Endothelial cell of umbilical vein (primary cell): ENCODE measurements at regions of chr2 and their contacts with region 1.

Region 1: DNA sequence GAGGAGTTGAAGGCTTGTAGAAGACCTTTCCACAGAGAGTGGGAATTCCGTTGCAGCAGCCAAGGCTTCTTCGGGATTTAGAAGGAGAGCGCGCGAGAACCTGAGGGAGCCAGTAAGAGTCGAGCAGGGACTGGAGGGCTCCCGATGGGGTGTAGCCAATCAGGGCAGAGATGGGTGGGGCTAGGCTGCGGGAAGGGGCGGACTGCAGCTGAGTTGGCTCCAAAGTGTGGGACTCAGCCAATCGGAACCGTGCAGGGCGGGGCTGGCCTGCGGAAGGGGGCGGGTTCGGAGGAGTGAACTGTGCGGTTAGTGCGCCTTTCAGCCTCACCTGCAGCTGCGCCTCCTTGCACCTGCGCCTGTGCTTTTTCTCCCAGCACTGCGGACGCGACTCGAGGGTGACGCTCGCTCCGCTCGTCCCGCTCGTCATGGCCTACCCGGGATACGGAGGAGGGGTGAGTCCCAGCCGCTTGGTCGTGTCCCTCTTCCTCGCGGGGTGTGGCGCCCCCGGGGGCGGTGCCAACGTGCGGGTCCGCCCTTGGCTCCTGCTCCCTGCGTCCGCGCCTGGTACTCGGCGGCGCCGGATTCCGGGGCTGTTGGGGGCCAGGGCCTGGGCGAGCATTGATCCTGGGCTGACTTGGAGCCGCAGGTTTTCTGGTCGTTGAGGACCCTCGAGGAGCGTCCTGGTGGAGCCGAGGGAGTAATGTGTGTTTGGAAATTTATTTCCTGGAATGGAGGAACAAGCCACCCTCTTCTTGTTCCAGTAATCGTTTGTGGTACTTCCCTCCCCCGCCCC is at the start of gene GCA:
- DNase-seq: peak; percentile 98
- H3K4me3 ChIP-seq: peak within 1 kb of the TSS; percentile 49 to 94 (median 82)
- H3K27ac ChIP-seq: peak within 1 kb of the TSS; percentile 27
- H3K4me1 ChIP-seq: peaks cover 4% of the 10 kb centered on the region
- H3K27me3 ChIP-seq: peaks cover 6 to 9% of the 10 kb centered on the region in 2 experiments
- CTCF ChIP-seq: peak in 1 of 2 donors; percentile 3
- POLR2A ChIP-seq: peak; percentile 76
- total RNA-seq, gene GCA: 6.2 and 10.7 TPM in 2 replicates

Region 2: GRCh38 chr2:162318328-162319180 is 25.5 kb before region 1 on chr2 and contains the start of gene IFIH1:
- CTCF ChIA-PET with region 1: no interaction called
- POLR2A ChIA-PET with region 1: no interaction called
- dilution Hi-C with region 1: no loop called
- intact Hi-C with region 1: loop called (anchors 1 kb)
- DNase-seq: peak; percentile 88
- H3K4me3 ChIP-seq: peak within 1 kb of the TSS; percentile 56 to 66 (median 59)
- H3K27ac ChIP-seq: peak within 1 kb of the TSS; percentile 43
- H3K4me1 ChIP-seq: peaks cover 8% of the 10 kb centered on the region
- H3K27me3 ChIP-seq: no peaks in the 10 kb centered on the region
- CTCF ChIP-seq: peak; percentile 22 to 48
- POLR2A ChIP-seq: no peak
- total RNA-seq, gene IFIH1: 4.7 and 6.9 TPM in 2 replicates

Region 3: GRCh38 chr2:162333968-162334367 is 10.1 kb before region 1 on chr2:
- CTCF ChIA-PET with region 1: interaction called, 12 read pairs
- POLR2A ChIA-PET with region 1: interaction called, 3 read pairs
- dilution Hi-C with region 1: no loop called
- intact Hi-C with region 1: no loop called
- DNase-seq: peak; percentile 35
- H3K4me3 ChIP-seq: no peak overlapping the region
- H3K27ac ChIP-seq: no peak overlapping the region
- H3K4me1 ChIP-seq: no peaks in the 10 kb centered on the region
- H3K27me3 ChIP-seq: peaks cover 0 to 2% of the 10 kb centered on the region in 2 experiments
- CTCF ChIP-seq: peak; percentile 19 to 26
- POLR2A ChIP-seq: no peak